ENCODE measurements at regions of chr20 and their contacts with region 1.

Region 1: GRCh38 chr20:37384683-37385174 is 38.8 kb downstream of the SRC start:
- DNase-seq: peak; percentile 78
- ATAC-seq: peak; percentile 82

Region 2: GRCh38 chr20:37276494-37277252 is 108.1 kb before region 1 on chr20:
- intact Hi-C with region 1: loop called (anchors 10 kb)
- DNase-seq: peak; percentile 66
- ATAC-seq: peak; percentile 95

Region 3: GRCh38 chr20:37426978-37427377 is 42.2 kb after region 1 on chr20:
- intact Hi-C with region 1: loop called (anchors 1 kb)
- DNase-seq: no peak
- ATAC-seq: no peak